Breast epithelium (tissue), 4 donors: ENCODE measurements at regions of chr6 and their contacts with region 1.

Region 1: GRCh38 chr6:138817822-138818308 is 22.0 kb downstream of the ECT2L start:
- DNase-seq: peak; percentile 83 to 94
- H3K4me3 ChIP-seq: peak overlapping the region in 1 of 3 donors; percentile 7
- H3K27ac ChIP-seq: peak overlapping the region; percentile 92 to 94
- H3K4me1 ChIP-seq: peaks cover 0 to 6% of the 10 kb centered on the region in 2 donors
- H3K27me3 ChIP-seq: no peaks in the 10 kb centered on the region
- CTCF ChIP-seq: no peak
- POLR2A ChIP-seq: no peak

Region 2: DNA sequence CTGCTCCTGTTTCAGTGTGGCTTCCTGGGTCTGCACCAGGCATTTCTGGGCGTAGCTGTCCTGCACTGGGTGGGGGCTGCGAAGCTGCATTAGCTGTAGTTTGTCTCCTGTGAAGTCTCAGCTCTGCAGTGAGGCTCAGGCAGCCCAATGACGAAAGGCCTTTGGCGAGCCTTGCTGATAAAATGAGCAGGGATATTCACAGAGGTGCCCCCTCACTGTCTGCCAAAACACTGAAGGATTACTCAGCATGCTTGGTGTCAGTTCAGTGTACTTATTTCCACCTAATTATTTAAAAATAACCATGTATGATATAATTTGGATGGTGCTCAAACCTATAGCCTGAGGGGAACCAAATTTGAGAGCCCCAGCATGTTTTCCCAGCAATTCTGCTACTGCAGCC is 51.5 kb after region 1 on chr6:
- intact Hi-C with region 1: no loop called
- DNase-seq: no peak
- H3K4me3 ChIP-seq: no peak overlapping the region
- H3K27ac ChIP-seq: no peak overlapping the region
- H3K4me1 ChIP-seq: no peaks in the 10 kb centered on the region
- H3K27me3 ChIP-seq: no peaks in the 10 kb centered on the region
- CTCF ChIP-seq: no peak
- POLR2A ChIP-seq: no peak

Region 3: DNA sequence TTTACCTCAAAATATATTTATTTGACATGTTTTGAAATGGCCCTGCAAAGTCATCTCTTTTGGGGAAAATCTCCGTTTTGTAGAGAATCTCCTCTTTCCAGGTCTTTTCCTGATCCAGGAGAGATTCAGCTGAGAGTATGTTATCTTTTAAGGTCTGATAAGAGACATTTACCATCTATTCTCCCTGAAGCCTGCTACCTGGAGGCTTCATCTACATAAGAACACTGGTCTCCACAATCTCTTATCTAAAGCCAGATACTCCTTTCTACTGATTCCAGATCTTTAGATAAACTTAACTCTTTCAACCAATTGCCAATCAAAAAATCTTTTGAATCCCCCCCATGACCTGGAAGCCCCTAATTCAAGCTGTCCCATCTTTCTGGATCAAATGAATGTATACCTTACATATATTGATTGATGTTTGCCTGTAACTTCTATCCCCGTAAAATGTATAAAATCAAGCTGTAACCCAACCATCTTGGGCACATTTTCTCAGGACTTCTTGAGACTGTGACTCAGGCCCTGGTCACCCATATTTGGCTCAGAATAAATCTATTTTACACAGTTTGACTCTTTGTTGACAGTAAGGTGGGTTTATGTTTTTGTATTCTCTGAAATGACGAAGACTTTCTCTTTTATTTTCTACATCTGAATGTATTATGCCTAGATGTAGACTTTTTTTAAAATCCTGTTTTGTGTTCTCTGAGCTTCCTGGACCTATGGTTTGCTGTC is 73.6 kb after region 1 on chr6:
- intact Hi-C with region 1: no loop called
- DNase-seq: no peak
- H3K4me3 ChIP-seq: no peak overlapping the region
- H3K27ac ChIP-seq: no peak overlapping the region
- H3K4me1 ChIP-seq: no peaks in the 10 kb centered on the region
- H3K27me3 ChIP-seq: no peaks in the 10 kb centered on the region
- CTCF ChIP-seq: no peak
- POLR2A ChIP-seq: no peak

Region 4: GRCh38 chr6:138987640-138988468 is 170.0 kb after region 1 on chr6 and contains the start of gene REPS1:
- intact Hi-C with region 1: loop called (anchors 2 kb)
- DNase-seq: peak; percentile 86 to 91
- H3K4me3 ChIP-seq: peak within 1 kb of the TSS; percentile 71 to 94 (median 90)
- H3K27ac ChIP-seq: peak within 1 kb of the TSS; percentile 96 to 98
- H3K4me1 ChIP-seq: no peaks in the 10 kb centered on the region
- H3K27me3 ChIP-seq: no peaks in the 10 kb centered on the region
- CTCF ChIP-seq: peak; percentile 96 to 98 (median 98)
- POLR2A ChIP-seq: peak; percentile 60
- total RNA-seq, gene REPS1: 40.5 to 79.9 (median 66.5) TPM

Region 5: GRCh38 chr6:140434761-140435160 is 1616.9 kb after region 1 on chr6:
- intact Hi-C with region 1: loop called (anchors 5 kb)
- DNase-seq: no peak
- H3K4me3 ChIP-seq: no peak overlapping the region
- H3K27ac ChIP-seq: no peak overlapping the region
- H3K4me1 ChIP-seq: no peaks in the 10 kb centered on the region
- H3K27me3 ChIP-seq: no peaks in the 10 kb centered on the region
- CTCF ChIP-seq: no peak
- POLR2A ChIP-seq: no peak